Gastrocnemius medialis (tissue), 4 donors: ENCODE measurements at regions of chr11 and their contacts with region 1.

Region 1: GRCh38 chr11:9613118-9613829 is 39.8 kb downstream of the WEE1 start:
- DNase-seq: peak; percentile 88 to 92
- ATAC-seq: peak; percentile 92
- H3K4me3 ChIP-seq: peak overlapping the region; percentile 46 to 66 (median 64)
- H3K27ac ChIP-seq: peak overlapping the region; percentile 86 to 96 (median 89)
- H3K4me1 ChIP-seq: peaks cover 0 to 16% of the 10 kb centered on the region in 2 donors
- H3K27me3 ChIP-seq: no peaks in the 10 kb centered on the region
- CTCF ChIP-seq: peak; percentile 79 to 94 (median 90)
- POLR2A ChIP-seq: peak; percentile 53 to 68

Region 2: GRCh38 chr11:7688238-7688826 is 1924.9 kb before region 1 on chr11:
- in situ Hi-C with region 1: no loop called
- intact Hi-C with region 1: no loop called
- DNase-seq: no peak
- ATAC-seq: no peak
- H3K4me3 ChIP-seq: no peak overlapping the region
- H3K27ac ChIP-seq: no peak overlapping the region
- H3K4me1 ChIP-seq: peaks cover 12 to 13% of the 10 kb centered on the region in 2 donors
- H3K27me3 ChIP-seq: no peaks in the 10 kb centered on the region
- CTCF ChIP-seq: peak in 3 of 5 experiments; percentile 35 to 66 (median 60)
- POLR2A ChIP-seq: no peak

Region 3: GRCh38 chr11:9534791-9535781 is 78.2 kb before region 1 on chr11:
- in situ Hi-C with region 1: loop called in 1 of 4 experiments (anchors 10 kb)
- intact Hi-C with region 1: loop called (anchors 1 kb)
- DNase-seq: peak; percentile 44 to 82
- ATAC-seq: peak; percentile 82 to 93
- H3K4me3 ChIP-seq: no peak overlapping the region
- H3K27ac ChIP-seq: peak overlapping the region in 3 of 4 donors; percentile 36 to 70 (median 61)
- H3K4me1 ChIP-seq: no peaks in the 10 kb centered on the region
- H3K27me3 ChIP-seq: no peaks in the 10 kb centered on the region
- CTCF ChIP-seq: peak; percentile 54 to 84 (median 76)
- POLR2A ChIP-seq: no peak

Region 4: GRCh38 chr11:9562728-9563115 is 50.6 kb before region 1 on chr11:
- in situ Hi-C with region 1: no loop called
- intact Hi-C with region 1: no loop called
- DNase-seq: no peak
- ATAC-seq: no peak
- H3K4me3 ChIP-seq: no peak overlapping the region
- H3K27ac ChIP-seq: no peak overlapping the region
- H3K4me1 ChIP-seq: peaks cover 7 to 10% of the 10 kb centered on the region in 2 donors
- H3K27me3 ChIP-seq: no peaks in the 10 kb centered on the region
- CTCF ChIP-seq: no peak
- POLR2A ChIP-seq: no peak

Region 5: GRCh38 chr11:9573052-9573774 is 40.1 kb before region 1 on chr11 and contains the start of gene WEE1:
- in situ Hi-C with region 1: no loop called
- intact Hi-C with region 1: loop called (anchors 1 kb)
- DNase-seq: peak; percentile 94 to 96
- ATAC-seq: peak; percentile 77 to 82
- H3K4me3 ChIP-seq: peak within 1 kb of the TSS; percentile 58 to 91 (median 81)
- H3K27ac ChIP-seq: peak within 1 kb of the TSS; percentile 89 to 97 (median 96)
- H3K4me1 ChIP-seq: peaks cover 12 to 21% of the 10 kb centered on the region in 2 donors
- H3K27me3 ChIP-seq: no peaks in the 10 kb centered on the region
- CTCF ChIP-seq: no peak
- POLR2A ChIP-seq: peak; percentile 81 to 90
- total RNA-seq, gene WEE1: 6.8 to 16.2 (median 10.6) TPM

Region 6: DNA sequence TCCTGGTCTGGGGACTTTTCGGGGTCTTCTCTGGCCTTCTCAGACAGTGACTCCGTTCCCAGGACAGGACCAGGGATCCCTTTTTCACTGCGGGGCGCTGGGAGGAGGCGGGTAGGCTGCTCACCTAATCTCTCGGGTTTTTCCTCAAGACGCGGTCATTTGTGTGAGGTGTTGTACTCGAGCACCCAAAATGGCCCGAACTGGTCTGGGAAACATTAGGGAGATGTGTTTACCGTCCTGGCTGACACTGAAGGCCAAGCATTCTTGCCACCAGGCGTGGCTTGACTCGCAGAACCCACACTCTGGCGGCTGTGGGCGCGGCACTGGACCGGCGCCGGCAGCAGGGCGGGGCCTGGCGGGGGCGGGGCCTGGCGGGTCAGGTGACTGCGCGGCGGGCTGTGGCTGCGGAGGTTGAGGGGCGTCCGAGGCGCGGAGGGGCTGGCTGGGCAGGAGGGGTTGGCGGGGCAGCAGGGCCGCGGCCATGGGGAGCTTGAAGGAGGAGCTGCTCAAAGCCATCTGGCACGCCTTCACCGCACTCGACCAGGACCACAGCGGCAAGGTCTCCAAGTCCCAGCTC is 50.5 kb after region 1 on chr11 and contains the start of gene SWAP70:
- in situ Hi-C with region 1: no loop called
- intact Hi-C with region 1: loop called (anchors 2 kb)
- DNase-seq: peak; percentile 67 to 76
- ATAC-seq: peak; percentile 90
- H3K4me3 ChIP-seq: peak within 1 kb of the TSS; percentile 79 to 84 (median 81)
- H3K27ac ChIP-seq: peak within 1 kb of the TSS; percentile 82 to 88 (median 86)
- H3K4me1 ChIP-seq: peaks cover 6% of the 10 kb centered on the region in 2 donors
- H3K27me3 ChIP-seq: peaks cover 0 to 4% (median 0%) of the 10 kb centered on the region in 3 donors
- CTCF ChIP-seq: peak; percentile 38 to 67 (median 59)
- POLR2A ChIP-seq: peak; percentile 35 to 63
- total RNA-seq, gene SWAP70: 6.5 to 14.4 (median 9.1) TPM

Region 7: DNA sequence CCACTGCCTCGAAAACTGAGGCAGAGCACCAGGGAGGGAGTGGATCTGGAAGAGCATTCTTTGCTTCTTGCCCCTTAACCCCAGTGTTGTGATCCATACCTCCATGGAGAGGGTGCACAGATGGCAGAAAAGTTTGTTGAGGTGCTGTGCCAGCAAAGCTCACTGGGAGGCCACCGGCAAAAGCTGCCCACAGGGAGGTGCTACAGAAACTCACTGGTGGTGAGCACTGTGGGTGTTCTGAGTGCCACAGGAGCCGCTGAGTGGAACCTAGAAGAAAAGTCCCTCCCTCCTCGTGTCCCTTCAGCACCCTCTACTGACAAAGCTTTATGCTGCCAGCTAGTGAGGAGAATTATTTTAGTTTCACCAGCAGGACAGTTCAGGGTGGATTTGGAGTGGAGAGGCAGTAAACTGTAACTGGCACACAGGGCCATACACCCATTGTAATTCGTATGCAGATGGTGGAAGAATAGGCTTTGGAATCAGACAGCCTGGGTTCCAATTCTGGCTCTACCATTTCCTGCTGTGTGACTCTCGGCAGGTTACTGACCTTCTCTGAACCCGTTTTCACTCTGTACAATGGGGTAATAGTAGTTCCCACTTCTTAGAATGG is 135.2 kb after region 1 on chr11:
- in situ Hi-C with region 1: no loop called
- intact Hi-C with region 1: loop called (anchors 1 kb)
- DNase-seq: peak in 1 of 2 donors; percentile 36
- ATAC-seq: peak; percentile 62 to 78
- H3K4me3 ChIP-seq: no peak overlapping the region
- H3K27ac ChIP-seq: no peak overlapping the region
- H3K4me1 ChIP-seq: no peaks in the 10 kb centered on the region
- H3K27me3 ChIP-seq: no peaks in the 10 kb centered on the region
- CTCF ChIP-seq: peak in 4 of 5 experiments; percentile 24 to 58 (median 46)
- POLR2A ChIP-seq: no peak

Region 8: DNA sequence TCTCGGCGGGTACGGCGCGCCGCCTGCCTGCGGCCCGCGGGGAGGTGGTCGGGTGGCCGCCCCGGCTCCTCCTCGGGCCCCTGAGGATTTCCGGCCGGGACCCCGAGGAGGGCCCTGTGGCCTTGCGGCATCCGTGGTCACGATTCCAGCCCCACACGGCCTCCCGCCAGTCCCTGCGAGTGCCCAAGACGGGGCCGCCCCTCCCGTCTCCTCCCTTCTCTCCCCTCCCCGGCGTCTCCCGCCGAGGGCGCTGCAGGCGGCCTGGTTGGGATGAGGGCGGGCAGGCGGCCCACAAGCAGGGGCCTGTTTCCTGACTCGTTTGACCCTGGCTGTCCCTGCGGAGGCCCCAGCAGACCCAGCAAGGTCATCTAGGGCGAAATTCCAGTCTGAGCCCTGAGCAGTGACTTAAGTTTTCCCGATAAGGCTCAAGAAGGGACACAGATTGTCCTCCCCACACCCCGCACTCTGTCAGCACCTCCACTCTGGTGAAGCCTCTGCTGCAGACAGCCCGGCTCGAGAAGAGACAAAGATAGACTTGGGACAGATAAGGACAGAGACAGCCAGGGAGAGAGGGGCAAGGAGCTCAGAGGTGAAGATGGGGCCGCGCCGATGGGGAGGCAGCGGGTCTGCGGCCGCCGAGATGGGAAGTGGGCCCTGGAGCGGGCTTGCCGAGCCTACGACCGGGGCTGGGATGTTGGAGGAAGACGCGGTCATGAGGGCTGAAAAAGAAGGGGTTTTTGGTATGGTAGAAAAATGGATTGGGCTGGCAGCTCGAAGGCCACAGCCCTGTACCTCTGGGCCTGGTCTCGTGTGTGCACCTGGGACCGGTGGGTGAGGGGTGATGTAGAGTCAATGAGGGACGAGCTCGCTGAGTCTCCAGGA is 145.6 kb after region 1 on chr11:
- in situ Hi-C with region 1: no loop called
- intact Hi-C with region 1: no loop called
- DNase-seq: peak; percentile 57 to 79
- ATAC-seq: peak; percentile 53 to 69
- H3K4me3 ChIP-seq: peak overlapping the region; percentile 61 to 86 (median 69)
- H3K27ac ChIP-seq: peak overlapping the region; percentile 76 to 86 (median 83)
- H3K4me1 ChIP-seq: peaks cover 18 to 25% of the 10 kb centered on the region in 2 donors
- H3K27me3 ChIP-seq: no peaks in the 10 kb centered on the region
- CTCF ChIP-seq: peak in 1 of 5 experiments; percentile 37
- POLR2A ChIP-seq: no peak

Region 9: GRCh38 chr11:9972989-9973388 is 359.7 kb after region 1 on chr11:
- in situ Hi-C with region 1: no loop called
- intact Hi-C with region 1: loop called (anchors 5 kb)
- DNase-seq: no peak
- ATAC-seq: peak; percentile 57 to 73
- H3K4me3 ChIP-seq: no peak overlapping the region
- H3K27ac ChIP-seq: no peak overlapping the region
- H3K4me1 ChIP-seq: peaks cover 15 to 17% of the 10 kb centered on the region in 2 donors
- H3K27me3 ChIP-seq: no peaks in the 10 kb centered on the region
- CTCF ChIP-seq: peak; percentile 43 to 65 (median 61)
- POLR2A ChIP-seq: no peak